ENCODE measurements at regions of chr1 and their contacts with region 1.

Region 1: DNA sequence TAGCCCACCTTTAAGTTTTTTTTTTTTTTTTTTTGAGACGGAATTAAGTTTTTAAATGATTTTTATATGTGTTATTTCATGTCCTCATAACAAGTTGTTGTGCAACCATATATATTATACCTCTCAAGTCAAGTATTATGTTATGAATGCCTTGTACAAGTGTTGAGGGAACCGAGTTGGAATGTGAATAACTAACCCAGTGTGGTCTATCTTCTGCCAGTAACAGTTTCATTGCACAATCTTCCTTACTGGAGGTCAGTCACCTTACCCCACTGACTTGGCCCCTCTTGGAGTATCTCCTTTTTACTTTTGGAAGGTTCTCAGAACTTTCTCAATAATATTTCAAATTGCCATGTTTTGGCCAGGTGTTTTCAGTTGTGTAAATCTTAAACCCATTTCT is 201.9 kb downstream of the CACNA1E start:
- DNase-seq: no peak
- ATAC-seq: no peak
- H3K4me3 ChIP-seq: no peak overlapping the region
- H3K27ac ChIP-seq: no peak overlapping the region
- H3K4me1 ChIP-seq: no peaks in the 10 kb centered on the region
- H3K27me3 ChIP-seq: 0 out of 5 replicates have a peak, but pooled peaks cover 0 to 5% of the 10 kb centered on the region in 2 experiments
- CTCF ChIP-seq: no peak
- EP300 ChIP-seq: no peak
- POLR2A ChIP-seq: no peak
- RAD21 ChIP-seq: no peak

Region 2: DNA sequence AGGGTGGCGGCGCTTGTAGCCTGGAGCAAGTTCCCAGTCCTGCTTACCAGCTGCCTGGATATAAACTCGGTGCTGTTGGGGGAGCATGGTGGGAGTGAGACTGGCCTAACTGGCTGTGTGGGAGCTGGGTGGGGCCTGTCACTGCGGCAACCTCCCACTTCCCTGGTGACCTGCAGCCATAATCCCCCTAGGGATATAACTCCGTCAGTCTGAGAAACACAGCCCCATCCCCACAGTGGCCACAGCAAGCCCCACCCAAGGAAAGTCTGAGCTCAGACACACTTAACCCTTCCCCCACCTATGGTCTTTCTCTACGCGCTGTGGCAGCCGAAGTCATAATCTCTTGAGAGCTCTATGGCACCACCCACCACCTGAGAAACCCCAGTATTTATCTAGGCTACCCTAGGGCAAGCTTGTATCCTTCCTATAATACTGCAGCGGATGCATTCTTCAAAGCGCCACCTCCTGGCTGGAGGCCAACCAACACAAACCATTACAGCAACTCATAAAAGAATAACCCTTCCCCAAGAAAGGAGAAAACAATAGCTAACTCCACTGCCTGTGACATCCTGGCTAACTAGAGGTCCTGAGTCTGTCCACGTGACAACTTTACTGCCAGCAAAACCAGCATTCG is 318.9 kb after region 1 on chr1:
- CTCF ChIA-PET with region 1: no interaction called
- POLR2A ChIA-PET with region 1: no interaction called
- in situ Hi-C with region 1: no loop called
- intact Hi-C with region 1: loop called (anchors 5 kb)
- DNase-seq: no peak
- ATAC-seq: no peak
- H3K4me3 ChIP-seq: no peak overlapping the region
- H3K27ac ChIP-seq: no peak overlapping the region
- H3K4me1 ChIP-seq: no peaks in the 10 kb centered on the region
- H3K27me3 ChIP-seq: no peaks in the 10 kb centered on the region
- CTCF ChIP-seq: peak; percentile 22; the same call in 1 of the 2 replicates
- EP300 ChIP-seq: no peak
- POLR2A ChIP-seq: no peak
- RAD21 ChIP-seq: no peak